GM10248 (cell line): ENCODE measurements at regions of chr22 and their contacts with region 1.

Region 1: GRCh38 chr22:21938071-21938822 is 14.4 kb downstream of the PPM1F start:
- DNase-seq: peak; percentile 94
- CTCF ChIP-seq: peak; percentile 99

Region 2: GRCh38 chr22:21712894-21713712 is 225.1 kb before region 1 on chr22:
- CTCF ChIA-PET with region 1: interaction called, 15 read pairs
- POLR2A ChIA-PET with region 1: no interaction called
- DNase-seq: peak; percentile 80
- CTCF ChIP-seq: peak; percentile 78

Region 3: DNA sequence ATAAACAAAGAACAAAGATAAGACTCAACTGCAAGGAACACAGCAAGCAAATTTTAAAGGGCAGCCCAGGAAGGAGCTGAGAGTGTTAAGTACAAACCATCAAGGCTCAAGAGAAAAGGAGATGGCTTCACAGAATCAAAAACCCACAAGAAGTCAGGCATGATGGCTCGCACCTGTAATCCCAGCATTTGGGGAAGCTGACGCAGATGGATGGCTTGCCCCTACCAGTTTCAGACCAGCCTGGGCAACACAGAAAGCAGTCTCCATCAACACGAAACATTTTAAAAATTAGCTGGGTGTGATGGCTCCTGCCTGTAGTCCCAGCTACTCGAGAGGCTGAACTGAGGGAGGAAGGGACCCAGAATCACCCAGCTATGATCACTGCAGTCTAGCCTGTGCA is 103.4 kb before region 1 on chr22:
- CTCF ChIA-PET with region 1: no interaction called
- POLR2A ChIA-PET with region 1: no interaction called
- DNase-seq: no peak
- CTCF ChIP-seq: no peak

Region 4: DNA sequence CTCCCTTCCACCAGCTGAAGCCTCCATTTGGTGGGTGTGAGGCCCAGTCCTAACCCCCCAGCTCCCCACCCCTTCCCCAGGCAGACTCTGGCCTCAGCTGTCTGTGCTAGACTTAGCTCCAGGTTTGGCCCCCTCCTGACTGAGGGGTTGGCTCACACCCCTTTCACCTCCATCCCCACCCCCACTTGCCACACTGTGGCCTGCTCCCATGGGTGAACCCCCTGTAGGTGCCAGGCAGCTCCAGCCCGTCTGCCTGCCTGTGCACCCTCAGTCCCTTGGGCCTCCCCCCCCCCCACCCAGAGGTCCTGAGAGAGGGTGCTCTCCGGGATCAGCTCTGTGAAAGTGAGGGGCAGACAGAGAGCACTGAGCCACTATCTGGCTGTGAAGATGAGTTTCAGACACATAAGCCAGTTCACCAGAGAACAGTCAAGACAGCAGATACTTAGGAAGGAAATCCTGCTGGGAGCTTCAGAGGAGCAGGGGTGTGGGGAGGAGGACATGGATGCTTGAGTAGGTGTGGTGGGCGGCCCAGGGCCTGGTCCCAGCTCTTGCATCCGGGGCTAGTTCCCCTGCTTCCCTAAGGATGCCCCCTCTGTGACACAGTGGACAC is 21.8 kb before region 1 on chr22:
- CTCF ChIA-PET with region 1: interaction called, 52 read pairs
- POLR2A ChIA-PET with region 1: no interaction called
- DNase-seq: no peak
- CTCF ChIP-seq: no peak

Region 5: DNA sequence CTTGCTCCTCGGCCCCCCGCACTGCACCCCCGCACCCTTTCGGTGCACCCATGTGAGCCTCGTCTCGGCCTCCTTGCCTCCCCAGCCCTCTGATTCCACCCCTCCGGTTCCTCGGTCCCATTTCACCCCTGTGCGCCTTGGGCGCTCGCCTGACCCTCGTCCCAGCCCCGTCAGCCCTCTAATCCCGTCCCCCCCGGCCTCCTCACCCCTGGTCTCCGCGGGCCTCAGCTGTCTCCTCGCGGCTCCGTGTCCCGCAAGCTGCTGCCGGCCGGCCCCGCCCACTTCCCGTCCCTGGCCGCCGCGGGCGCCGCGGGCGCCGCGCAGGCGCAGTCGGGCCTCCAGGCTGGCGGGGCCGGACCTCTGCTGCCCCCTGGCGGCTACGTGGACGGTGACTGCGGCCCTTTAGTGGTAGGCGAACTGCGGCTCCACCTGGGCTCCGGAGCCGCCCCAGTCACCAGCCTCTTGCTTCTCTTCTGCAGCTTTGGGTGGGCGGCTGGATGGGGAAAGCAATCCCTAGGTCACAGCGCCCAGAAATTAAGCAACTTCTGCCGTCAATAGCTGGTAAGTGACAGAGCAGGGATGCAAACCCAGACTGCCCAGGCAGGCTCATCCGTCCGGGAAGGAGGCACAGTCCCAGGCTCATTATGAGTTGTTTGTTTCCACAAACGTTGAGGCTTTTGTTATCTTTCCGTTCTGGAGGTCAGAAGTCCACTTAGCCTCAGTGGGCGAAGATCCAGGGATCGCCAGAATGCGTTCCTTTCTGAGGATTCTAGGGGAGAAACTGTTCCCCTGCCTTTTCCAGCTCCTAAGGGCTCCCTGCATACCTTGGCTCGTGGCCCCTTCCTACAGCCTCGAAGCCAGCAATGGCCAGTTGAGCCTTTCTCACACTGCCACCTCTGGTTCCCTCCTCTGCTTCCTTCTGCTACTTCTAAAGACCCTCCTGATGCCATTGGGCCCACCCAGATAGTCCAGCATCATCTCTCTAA is 14.6 kb after region 1 on chr22 and contains the start of gene PPM1F:
- CTCF ChIA-PET with region 1: interaction called, 130 read pairs
- POLR2A ChIA-PET with region 1: no interaction called
- DNase-seq: peak; percentile 98
- CTCF ChIP-seq: peak; percentile 91

Region 6: DNA sequence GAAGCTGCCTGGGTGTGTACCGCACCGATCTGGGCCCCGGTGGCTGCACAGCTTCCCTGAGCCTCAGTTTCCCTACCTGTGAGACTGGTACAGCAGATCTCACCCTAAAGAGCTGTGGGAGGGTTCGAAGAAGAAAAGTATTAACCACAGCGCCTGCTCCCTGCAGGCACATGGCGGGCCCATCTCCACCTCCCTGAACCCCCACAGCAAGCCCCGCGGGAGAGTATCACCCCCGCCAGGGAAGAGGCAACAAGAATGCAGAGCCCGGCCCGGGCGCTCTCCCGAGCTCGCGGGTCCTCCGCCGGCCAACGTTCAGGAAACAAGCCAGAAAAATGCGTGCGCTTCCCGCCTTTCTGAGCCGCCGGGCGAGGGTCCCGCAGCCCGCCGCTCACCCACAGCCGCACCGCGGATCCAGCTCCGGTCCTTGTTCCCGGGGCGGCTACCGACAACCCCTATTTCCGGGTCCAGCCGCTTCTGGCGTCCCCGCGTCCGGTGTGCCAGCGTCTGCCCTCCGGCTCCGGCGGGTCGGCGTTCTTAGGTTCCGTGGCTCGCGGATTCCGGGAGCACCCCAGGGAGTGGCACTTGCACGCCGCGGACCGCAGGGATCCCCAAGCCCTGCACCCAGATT is 44.2 kb after region 1 on chr22 and contains the start of gene TOP3B:
- CTCF ChIA-PET with region 1: interaction called, 14 read pairs
- POLR2A ChIA-PET with region 1: no interaction called
- DNase-seq: peak; percentile 93
- CTCF ChIP-seq: no peak

Region 7: GRCh38 chr22:22074634-22075381 is 136.6 kb after region 1 on chr22:
- CTCF ChIA-PET with region 1: no interaction called
- POLR2A ChIA-PET with region 1: no interaction called
- DNase-seq: no peak
- CTCF ChIP-seq: no peak